Gastrocnemius medialis (tissue), 4 donors: ENCODE measurements at regions of chr1 and their contacts with region 1.

Region 1: DNA sequence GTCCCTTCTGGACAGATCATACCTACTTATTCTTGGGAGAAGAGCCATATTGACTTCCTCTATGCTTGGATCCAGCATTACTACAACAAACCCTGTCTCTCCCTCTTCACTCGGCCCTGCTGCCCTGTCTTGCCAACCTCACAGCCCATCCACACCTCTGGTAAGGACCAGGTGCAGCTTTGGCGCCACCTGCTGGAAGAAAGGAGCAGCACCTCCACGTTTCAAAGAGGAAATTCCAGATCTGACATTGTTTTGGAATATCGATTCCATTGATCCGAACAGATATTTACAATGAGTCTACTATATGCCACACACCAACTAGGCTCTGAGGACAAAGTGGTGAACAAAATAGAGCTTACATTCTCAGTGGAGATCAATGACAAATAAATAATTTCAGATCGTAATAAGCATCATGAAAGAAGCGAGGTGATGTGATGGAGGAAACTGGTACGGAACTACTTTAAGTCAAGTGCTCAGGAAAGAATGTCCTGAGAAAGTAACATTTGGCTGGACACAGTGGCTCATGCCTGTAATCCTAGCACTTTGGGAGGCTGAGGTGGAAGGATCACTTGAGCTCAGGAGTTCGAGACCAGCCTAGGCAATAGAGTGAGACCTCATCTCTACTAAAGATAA is 18.7 kb downstream of the MFSD2A start:
- DNase-seq: peak; percentile 40 to 51
- ATAC-seq: peak; percentile 50 to 65
- H3K4me3 ChIP-seq: no peak overlapping the region
- H3K27ac ChIP-seq: no peak overlapping the region
- H3K4me1 ChIP-seq: no peaks in the 10 kb centered on the region
- H3K27me3 ChIP-seq: no peaks in the 10 kb centered on the region
- CTCF ChIP-seq: peak; percentile 86 to 97 (median 94)
- POLR2A ChIP-seq: no peak

Region 2: GRCh38 chr1:39816415-39817090 is 157.1 kb before region 1 on chr1:
- in situ Hi-C with region 1: loop called (anchors 5 to 10 kb)
- intact Hi-C with region 1: loop called (anchors 1 kb)
- DNase-seq: peak; percentile 30 to 59
- ATAC-seq: peak; percentile 83 to 85
- H3K4me3 ChIP-seq: no peak overlapping the region
- H3K27ac ChIP-seq: no peak overlapping the region
- H3K4me1 ChIP-seq: no peaks in the 10 kb centered on the region
- H3K27me3 ChIP-seq: peaks cover 0 to 3% (median 0%) of the 10 kb centered on the region in 3 donors
- CTCF ChIP-seq: peak; percentile 76 to 94 (median 87)
- POLR2A ChIP-seq: no peak

Region 3: GRCh38 chr1:39825432-39825951 is 148.1 kb before region 1 on chr1:
- in situ Hi-C with region 1: loop called (anchors 5 to 10 kb)
- intact Hi-C with region 1: no loop called
- DNase-seq: no peak
- ATAC-seq: no peak
- H3K4me3 ChIP-seq: no peak overlapping the region
- H3K27ac ChIP-seq: no peak overlapping the region
- H3K4me1 ChIP-seq: no peaks in the 10 kb centered on the region
- H3K27me3 ChIP-seq: peaks cover 0 to 3% (median 3%) of the 10 kb centered on the region in 3 donors
- CTCF ChIP-seq: no peak
- POLR2A ChIP-seq: no peak

Region 4: GRCh38 chr1:39919545-39919944 is 54.1 kb before region 1 on chr1:
- in situ Hi-C with region 1: loop called in 2 of 4 experiments (anchors 5 to 10 kb)
- intact Hi-C with region 1: loop called (anchors 1 kb)
- DNase-seq: no peak
- ATAC-seq: peak; percentile 77 to 82
- H3K4me3 ChIP-seq: no peak overlapping the region
- H3K27ac ChIP-seq: no peak overlapping the region
- H3K4me1 ChIP-seq: no peaks in the 10 kb centered on the region
- H3K27me3 ChIP-seq: peaks cover 0 to 8% (median 6%) of the 10 kb centered on the region in 3 donors
- CTCF ChIP-seq: peak in 4 of 5 experiments; percentile 21 to 63 (median 48)
- POLR2A ChIP-seq: no peak

Region 5: DNA sequence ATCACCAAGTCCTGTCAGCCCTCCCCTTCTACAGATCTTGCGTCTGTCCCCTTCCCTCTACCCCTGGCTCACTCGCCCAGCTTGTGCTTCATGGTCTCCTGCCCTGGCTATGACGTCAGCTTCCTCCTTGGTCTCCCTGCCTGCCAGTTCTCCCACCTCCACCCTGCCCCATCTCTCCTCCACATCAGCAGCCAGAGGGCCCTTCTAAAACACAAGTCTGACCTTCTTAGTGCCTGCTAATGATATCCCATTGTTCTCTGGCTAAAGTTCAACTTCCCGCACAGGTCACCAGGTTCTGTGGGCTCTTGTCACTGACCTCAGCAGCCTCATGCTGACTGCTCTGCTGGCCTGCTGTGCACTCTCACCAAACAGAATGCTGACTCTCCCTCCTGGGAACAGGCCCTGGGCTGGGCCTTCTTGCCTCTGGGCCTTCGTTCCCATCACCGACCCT is 47.3 kb before region 1 on chr1:
- in situ Hi-C with region 1: loop called in 2 of 4 experiments (anchors 5 to 10 kb)
- intact Hi-C with region 1: no loop called
- DNase-seq: no peak
- ATAC-seq: no peak
- H3K4me3 ChIP-seq: no peak overlapping the region
- H3K27ac ChIP-seq: no peak overlapping the region
- H3K4me1 ChIP-seq: no peaks in the 10 kb centered on the region
- H3K27me3 ChIP-seq: peaks cover 0 to 8% (median 6%) of the 10 kb centered on the region in 3 donors
- CTCF ChIP-seq: no peak
- POLR2A ChIP-seq: no peak